HEK293T (cell line): ENCODE measurements at regions of chr4 and their contacts with region 1.

Region 1: GRCh38 chr4:3480528-3481112 is 17.5 kb downstream of the DOK7 start:
- DNase-seq: peak; percentile 91

Region 2: DNA sequence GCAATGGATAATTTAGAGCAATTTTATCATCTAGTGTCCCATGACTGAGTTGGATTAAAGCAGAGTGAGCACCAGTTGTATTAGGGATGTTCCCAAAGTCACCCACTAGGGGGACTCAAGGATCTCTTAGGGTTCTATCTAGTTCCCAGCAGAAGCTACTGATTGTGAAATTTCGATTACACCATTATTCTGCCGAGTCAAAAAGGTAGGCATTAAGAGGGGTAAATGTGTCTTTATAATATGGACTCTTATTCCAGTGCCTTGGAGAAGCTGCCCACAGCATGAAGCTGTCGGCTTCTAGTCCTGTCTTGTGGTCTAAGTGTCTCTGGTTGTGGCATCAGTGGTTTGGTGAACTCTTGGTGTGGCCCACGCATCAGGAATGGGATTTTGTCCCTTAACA is 134.5 kb before region 1 on chr4:
- CTCF ChIA-PET with region 1: interaction called, 17 read pairs
- POLR2A ChIA-PET with region 1: no interaction called
- DNase-seq: peak; percentile 78

Region 3: DNA sequence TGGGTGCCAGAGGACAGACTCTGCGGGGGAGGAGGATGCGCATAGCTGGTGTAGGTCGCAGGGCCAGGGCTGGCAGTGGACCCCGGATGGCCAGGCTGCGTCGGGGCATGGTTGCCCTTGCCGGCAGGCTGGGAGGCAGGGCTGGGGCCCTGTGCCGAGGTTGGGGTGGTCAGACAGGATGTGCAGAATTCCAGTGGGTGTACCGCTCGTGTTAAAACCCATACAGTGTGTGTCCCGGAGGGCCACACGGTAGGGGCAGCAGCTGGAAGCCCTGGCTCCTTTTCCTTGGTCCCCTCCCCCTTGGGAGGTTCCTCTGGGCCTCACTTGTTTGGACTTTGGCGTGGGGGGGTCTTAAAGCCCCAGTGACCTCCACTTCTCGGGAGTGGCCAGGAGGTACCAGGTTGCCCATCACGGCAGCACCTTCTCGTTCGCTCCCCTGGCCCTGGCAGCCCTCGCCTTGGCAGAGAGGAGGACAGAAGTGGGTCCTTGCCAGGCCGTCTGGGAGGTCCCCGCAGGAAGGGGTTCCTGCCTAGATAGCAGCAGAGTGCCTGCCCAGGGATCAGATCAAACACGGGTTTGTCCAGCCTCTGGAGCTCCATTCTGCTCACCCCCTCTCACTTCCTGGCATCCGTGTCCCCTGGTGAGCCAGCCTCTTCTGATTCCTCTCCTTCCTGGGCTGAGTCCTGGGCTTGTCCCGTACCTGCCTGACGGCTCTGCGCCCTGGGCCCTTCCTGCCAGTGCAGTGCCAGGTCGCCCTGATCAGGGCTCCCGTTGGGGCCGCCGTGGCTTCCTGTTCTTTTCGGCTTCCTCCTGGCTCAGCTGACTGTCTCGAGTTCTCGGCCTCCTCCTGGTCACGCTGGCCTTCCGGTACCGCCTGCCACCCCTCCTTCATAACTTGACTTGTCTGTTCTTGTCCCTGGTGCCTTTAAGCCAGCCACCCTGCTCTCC is 95.6 kb before region 1 on chr4:
- CTCF ChIA-PET with region 1: no interaction called
- POLR2A ChIA-PET with region 1: no interaction called
- DNase-seq: no peak

Region 4: GRCh38 chr4:3470244-3471097 is 10.1 kb before region 1 on chr4:
- CTCF ChIA-PET with region 1: interaction called, 13 read pairs
- POLR2A ChIA-PET with region 1: no interaction called
- DNase-seq: no peak